ENCODE measurements at regions of chr10 and their contacts with region 1.

Region 1: GRCh38 chr10:33193057-33193700 is 141.3 kb downstream of the NRP1 start:
- DNase-seq: peak; percentile 81 to 88
- H3K4me3 ChIP-seq: no peak overlapping the region
- H3K27ac ChIP-seq: peak overlapping the region; percentile 68 to 70
- H3K4me1 ChIP-seq: no peaks in the 10 kb centered on the region
- H3K27me3 ChIP-seq: no peaks in the 10 kb centered on the region
- CTCF ChIP-seq: peak; percentile 72 to 84 (median 78)
- POLR2A ChIP-seq: no peak

Region 2: DNA sequence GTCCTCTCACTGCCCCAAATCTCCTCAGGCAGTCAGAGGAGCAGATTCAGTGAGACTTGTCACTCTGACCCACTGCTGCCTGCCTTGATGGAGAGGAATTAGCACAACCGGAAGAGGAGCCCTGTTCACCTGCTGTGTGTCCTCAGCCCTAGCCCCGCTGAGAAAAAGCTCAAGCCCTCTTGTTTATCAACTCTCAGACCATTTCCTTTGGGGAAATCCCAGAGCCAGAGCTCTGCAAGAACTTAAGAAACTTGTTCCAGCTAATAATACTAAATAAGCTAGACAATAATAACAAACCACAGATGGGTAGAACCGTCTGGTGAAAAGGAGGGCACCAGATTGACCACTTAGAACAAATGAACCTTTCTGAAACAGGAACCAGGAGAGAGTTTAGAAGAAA is 197.4 kb before region 1 on chr10:
- intact Hi-C with region 1: no loop called
- DNase-seq: no peak
- H3K4me3 ChIP-seq: no peak overlapping the region
- H3K27ac ChIP-seq: peak overlapping the region in 1 of 2 donors; percentile 3
- H3K4me1 ChIP-seq: no peaks in the 10 kb centered on the region
- H3K27me3 ChIP-seq: no peaks in the 10 kb centered on the region
- CTCF ChIP-seq: no peak
- POLR2A ChIP-seq: no peak

Region 3: GRCh38 chr10:34637418-34637911 is 1444.3 kb after region 1 on chr10:
- intact Hi-C with region 1: loop called (anchors 10 kb)
- DNase-seq: peak; percentile 57 to 61
- H3K4me3 ChIP-seq: no peak overlapping the region
- H3K27ac ChIP-seq: no peak overlapping the region
- H3K4me1 ChIP-seq: peaks cover 0 to 12% of the 10 kb centered on the region in 2 donors
- H3K27me3 ChIP-seq: no peaks in the 10 kb centered on the region
- CTCF ChIP-seq: peak; percentile 80 to 95 (median 86)
- POLR2A ChIP-seq: no peak

Measured in uterus (tissue), 4 donors.